WTC11 (cell line): ENCODE measurements at regions of chr13 and their contacts with region 1.

Region 1: GRCh38 chr13:28313579-28313978 is 175.2 kb downstream of the PAN3 start:
- DNase-seq: peak; percentile 36
- ATAC-seq: peak; percentile 60
- H3K4me3 Mint-ChIP-seq: no peak overlapping the region
- H3K27ac Mint-ChIP-seq: 0 out of 2 replicates have a peak overlapping the region, but pooled peaks have one; percentile 50
- H3K4me1 Mint-ChIP-seq: peaks cover 5% of the 10 kb centered on the region
- H3K27me3 Mint-ChIP-seq: no peaks in the 10 kb centered on the region
- CTCF ChIP-seq: no peak

Region 2: DNA sequence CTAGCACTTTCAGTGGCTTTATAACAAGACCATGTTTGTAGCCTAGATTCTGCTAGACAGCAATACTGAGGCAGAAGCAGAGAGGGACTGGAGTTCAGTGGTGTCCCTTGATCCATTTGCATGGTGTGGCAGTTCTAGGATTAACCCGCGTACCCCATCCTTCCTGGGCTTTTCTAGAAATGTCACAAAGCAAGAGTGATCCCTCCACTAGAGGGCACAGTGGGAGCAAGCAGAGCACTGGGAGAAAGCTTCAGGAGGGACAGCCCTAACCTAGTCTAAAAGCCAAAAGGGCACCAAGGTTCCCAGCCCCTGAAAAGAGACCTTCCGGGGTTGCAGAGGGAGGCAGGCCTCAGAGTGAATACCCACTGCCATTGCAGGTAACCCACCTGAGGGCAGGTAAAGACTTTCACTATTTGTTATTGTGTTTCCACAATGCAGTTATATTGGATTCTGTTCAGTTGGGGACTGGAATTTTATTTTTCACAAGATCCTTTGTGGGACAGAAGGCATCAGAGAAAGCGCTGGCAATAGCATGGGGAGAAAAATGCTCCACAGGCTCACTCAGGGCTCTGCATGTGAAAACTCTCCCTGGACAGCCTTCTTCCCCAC is 10.7 kb after region 1 on chr13:
- CTCF ChIA-PET with region 1: interaction called, 13 read pairs
- POLR2A ChIA-PET with region 1: no interaction called
- DNase-seq: peak; percentile 75
- ATAC-seq: peak; percentile 94
- H3K4me3 Mint-ChIP-seq: no peak overlapping the region
- H3K27ac Mint-ChIP-seq: no peak overlapping the region
- H3K4me1 Mint-ChIP-seq: peaks cover 19% of the 10 kb centered on the region
- H3K27me3 Mint-ChIP-seq: no peaks in the 10 kb centered on the region
- CTCF ChIP-seq: peak; percentile 50